ENCODE measurements at regions of chr9 and their contacts with region 1.

Region 1: GRCh38 chr9:114405294-114406034 is 17.7 kb upstream of the AKNA start:
- DNase-seq: peak; percentile 84
- H3K4me3 Mint-ChIP-seq: no peak overlapping the region
- H3K27ac Mint-ChIP-seq: no peak overlapping the region
- H3K4me1 Mint-ChIP-seq: peaks cover 11% of the 10 kb centered on the region
- H3K27me3 Mint-ChIP-seq: no peaks in the 10 kb centered on the region
- CTCF ChIP-seq: peak; percentile 83

Region 2: DNA sequence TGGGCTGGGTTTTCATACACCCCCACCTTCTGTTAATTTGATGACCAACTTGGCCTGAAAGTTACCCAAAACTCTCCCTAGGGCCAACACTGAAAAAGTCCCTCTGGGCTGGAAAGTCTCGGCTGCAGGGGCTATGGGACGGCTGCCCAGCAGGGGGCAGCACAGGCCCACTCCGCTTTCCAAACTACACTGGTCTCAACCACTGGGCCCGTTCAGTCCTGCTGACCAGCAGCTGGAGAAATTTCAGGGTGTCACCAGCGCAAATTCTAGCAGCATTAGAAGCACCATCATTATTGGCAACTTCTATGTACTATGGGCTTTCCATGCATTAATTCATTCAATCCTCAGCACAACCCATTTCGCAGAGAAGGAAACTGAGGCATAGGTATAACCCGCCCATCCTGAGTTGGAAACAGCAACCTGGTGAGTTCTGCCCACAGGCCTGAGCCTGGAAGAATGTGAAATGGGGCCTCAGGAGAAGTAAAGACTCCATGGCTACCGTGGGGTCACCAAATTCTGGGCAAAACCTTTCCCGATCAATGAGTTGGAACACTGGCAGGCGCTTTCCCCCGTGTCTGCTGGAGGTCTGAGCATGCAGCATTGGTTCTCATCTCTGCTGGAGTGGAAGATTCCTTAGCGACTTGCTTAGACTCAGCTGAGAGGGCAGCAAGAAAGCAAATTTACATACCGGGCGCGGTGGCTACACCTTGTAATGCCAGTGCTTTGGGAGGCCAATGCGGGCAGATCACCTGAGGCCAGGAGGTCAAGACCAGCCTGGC is 66.1 kb before region 1 on chr9:
- CTCF ChIA-PET with region 1: interaction called, 28 read pairs
- POLR2A ChIA-PET with region 1: no interaction called
- intact Hi-C with region 1: loop called (anchors 1 kb)
- DNase-seq: peak; percentile 60
- H3K4me3 Mint-ChIP-seq: no peak overlapping the region
- H3K27ac Mint-ChIP-seq: no peak overlapping the region
- H3K4me1 Mint-ChIP-seq: no peaks in the 10 kb centered on the region
- H3K27me3 Mint-ChIP-seq: no peaks in the 10 kb centered on the region
- CTCF ChIP-seq: peak; percentile 89

Region 3: GRCh38 chr9:114420581-114420980 is 15.1 kb after region 1 on chr9:
- CTCF ChIA-PET with region 1: interaction called, 24 read pairs
- POLR2A ChIA-PET with region 1: no interaction called
- intact Hi-C with region 1: no loop called
- DNase-seq: no peak
- H3K4me3 Mint-ChIP-seq: no peak overlapping the region
- H3K27ac Mint-ChIP-seq: no peak overlapping the region
- H3K4me1 Mint-ChIP-seq: no peaks in the 10 kb centered on the region
- H3K27me3 Mint-ChIP-seq: no peaks in the 10 kb centered on the region
- CTCF ChIP-seq: no peak

Region 4: DNA sequence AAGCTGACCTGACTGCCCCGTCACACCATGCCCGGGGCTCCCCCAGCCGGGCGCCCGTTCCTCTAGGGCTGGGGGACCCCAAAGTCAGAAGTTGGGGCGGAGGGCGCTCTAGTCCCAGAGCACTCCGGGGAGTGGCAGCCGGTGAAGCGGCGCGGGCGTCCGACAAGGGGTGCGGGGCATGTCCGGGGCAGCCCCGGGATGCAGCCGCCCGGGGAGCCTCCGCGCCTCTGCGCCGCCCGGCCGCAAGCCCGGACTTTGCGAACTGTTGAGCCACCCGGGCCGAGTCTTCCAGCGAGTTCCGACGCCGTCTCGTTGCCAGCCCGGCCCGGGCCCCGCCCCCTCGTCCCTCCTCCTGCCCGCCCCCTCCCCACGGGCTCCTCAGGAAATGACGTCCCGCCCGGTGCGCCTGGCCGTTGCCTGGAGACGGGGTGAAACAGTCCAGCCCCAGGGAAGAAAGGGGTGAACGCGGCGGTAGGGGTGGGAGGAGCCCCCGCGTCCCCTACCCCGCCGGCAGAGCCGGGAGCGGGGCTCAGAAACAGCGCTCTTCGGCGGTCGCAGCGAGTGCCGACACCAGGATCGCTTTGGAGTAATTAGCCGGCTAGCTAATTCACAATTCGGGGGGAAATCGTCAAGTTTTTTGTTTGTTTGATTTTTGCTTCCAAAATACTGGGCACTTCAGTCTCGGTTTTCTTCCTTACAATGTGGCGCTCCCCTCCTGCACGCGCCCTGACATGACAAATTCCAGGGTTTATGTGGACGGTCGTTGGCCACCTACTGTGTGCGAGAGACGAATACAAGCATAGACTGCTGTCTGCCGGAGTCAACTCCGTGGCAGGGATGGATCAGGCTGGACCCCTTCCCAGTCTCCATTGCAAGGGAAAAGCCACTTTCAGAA is 100.0 kb after region 1 on chr9 and contains the start of gene WHRN:
- CTCF ChIA-PET with region 1: interaction called, 19 read pairs
- POLR2A ChIA-PET with region 1: no interaction called
- intact Hi-C with region 1: no loop called
- DNase-seq: peak; percentile 86
- H3K4me3 Mint-ChIP-seq: peak within 1 kb of the TSS; percentile 85
- H3K27ac Mint-ChIP-seq: peak within 1 kb of the TSS; percentile 94
- H3K4me1 Mint-ChIP-seq: peaks cover 27% of the 10 kb centered on the region
- H3K27me3 Mint-ChIP-seq: peaks cover 29% of the 10 kb centered on the region
- CTCF ChIP-seq: no peak
- total RNA-seq, gene WHRN: 9.4 and 12.8 TPM in 2 replicates

Region 5: GRCh38 chr9:114674798-114675540 is 269.5 kb after region 1 on chr9:
- CTCF ChIA-PET with region 1: interaction called, 10 read pairs
- POLR2A ChIA-PET with region 1: no interaction called
- intact Hi-C with region 1: no loop called
- DNase-seq: peak; percentile 45
- H3K4me3 Mint-ChIP-seq: no peak overlapping the region
- H3K27ac Mint-ChIP-seq: peak overlapping the region; percentile 3
- H3K4me1 Mint-ChIP-seq: peaks cover 47% of the 10 kb centered on the region
- H3K27me3 Mint-ChIP-seq: no peaks in the 10 kb centered on the region
- CTCF ChIP-seq: no peak

Region 6: DNA sequence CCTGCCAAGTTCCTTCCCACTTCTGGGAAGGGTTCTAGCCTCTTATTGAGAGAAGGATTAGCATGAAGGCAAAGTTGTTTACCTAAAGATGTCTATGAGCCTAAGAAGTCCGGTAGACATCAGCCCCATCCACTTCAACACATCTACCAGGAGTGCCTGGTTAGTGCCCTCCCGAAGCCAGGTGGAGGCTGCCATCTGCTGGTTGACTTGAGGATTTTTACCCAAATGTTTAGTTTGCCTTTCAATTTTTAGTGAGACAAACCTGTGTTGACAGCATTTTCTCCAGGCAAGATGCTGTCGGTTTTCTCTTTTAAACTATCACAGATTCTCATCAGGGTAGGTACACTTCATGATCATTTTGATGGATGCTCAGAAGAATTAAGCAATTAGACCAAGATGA is 608.5 kb after region 1 on chr9:
- CTCF ChIA-PET with region 1: interaction called, 3 read pairs
- POLR2A ChIA-PET with region 1: no interaction called
- intact Hi-C with region 1: loop called (anchors 1 kb)
- DNase-seq: peak; percentile 84
- H3K4me3 Mint-ChIP-seq: no peak overlapping the region
- H3K27ac Mint-ChIP-seq: no peak overlapping the region
- H3K4me1 Mint-ChIP-seq: peaks cover 17% of the 10 kb centered on the region
- H3K27me3 Mint-ChIP-seq: peaks cover 14% of the 10 kb centered on the region
- CTCF ChIP-seq: peak; percentile 75

Measured in MCF 10A (cell line).